ENCODE measurements at regions of chr5 and their contacts with region 1.

Region 1: GRCh38 chr5:140664359-140665119 is at the start of gene WDR55:
- DNase-seq: peak; percentile 94
- H3K4me3 Mint-ChIP-seq: peak within 1 kb of the TSS; percentile 100
- H3K27ac Mint-ChIP-seq: peak within 1 kb of the TSS; percentile 93
- H3K4me1 Mint-ChIP-seq: peaks cover 28% of the 10 kb centered on the region
- H3K27me3 Mint-ChIP-seq: no peaks in the 10 kb centered on the region
- total RNA-seq, gene WDR55: 42.7 and 43.2 TPM in 2 replicates

Region 2: DNA sequence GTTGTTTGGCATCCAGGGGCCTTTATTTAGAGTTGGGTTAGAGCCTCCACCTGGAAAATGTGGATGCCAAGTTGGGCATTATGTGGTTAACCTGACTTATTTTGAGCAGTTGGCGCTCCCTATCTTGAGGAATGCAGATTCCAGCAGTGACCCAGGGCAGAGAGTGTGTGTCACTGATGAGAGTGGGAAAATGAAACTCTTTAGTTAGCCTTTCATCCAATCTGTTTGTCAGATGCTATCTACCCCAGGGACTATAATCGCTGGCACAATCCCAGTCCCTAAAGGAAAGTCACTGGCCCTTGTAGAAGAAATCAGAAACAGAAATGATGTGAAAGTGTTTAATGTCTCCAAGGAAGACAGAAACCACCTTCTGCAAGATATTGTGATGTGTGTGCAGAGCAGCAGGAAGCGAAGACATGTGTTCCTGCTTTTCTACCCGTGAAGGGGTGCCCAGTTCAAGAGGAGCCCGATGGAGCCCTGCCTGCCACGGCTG is 1171.8 kb before region 1 on chr5:
- intact Hi-C with region 1: no loop called
- DNase-seq: no peak
- H3K4me3 Mint-ChIP-seq: no peak overlapping the region
- H3K27ac Mint-ChIP-seq: no peak overlapping the region
- H3K4me1 Mint-ChIP-seq: peaks cover 37% of the 10 kb centered on the region
- H3K27me3 Mint-ChIP-seq: no peaks in the 10 kb centered on the region

Region 3: DNA sequence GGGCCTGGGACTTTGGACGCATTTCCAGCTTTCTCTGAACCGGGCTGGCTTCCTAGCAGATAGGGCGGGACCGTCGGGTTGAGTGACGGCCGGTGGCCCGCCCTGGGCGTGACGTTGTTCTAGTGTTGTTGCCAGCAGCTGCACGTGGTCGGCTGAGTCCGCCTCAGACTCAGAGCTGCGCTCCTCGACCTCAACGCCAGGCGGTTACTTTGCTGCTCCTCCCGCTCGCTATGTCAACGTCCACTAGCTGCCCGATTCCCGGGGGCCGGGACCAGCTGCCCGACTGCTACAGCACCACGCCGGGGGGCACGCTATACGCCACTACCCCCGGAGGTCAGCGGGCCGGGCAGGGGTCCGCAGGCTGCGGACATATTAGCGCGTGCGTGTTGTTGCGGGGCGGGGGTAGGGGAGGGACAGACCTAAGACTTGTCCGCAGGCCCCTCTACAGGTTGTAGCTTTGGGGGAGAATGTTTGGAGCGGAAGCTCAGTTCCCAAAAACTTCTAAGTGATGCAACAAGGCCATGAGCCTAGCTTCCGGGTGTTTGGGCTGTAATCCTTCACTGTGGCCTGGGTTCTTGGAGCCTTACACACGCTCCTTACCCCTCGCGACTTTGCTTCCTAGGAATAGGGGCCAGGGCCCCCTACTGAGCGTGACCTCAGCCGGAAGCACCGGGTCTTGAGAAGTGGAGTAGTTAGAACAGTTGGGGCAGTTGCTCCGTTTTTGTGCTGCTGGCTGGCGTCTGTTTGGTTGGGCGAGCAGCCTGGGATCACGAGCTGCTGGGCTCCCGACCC is 116.8 kb before region 1 on chr5 and contains the start of gene EIF4EBP3:
- intact Hi-C with region 1: loop called (anchors 1 kb)
- DNase-seq: peak; percentile 81
- H3K4me3 Mint-ChIP-seq: peak within 1 kb of the TSS; percentile 80
- H3K27ac Mint-ChIP-seq: peak within 1 kb of the TSS; percentile 82
- H3K4me1 Mint-ChIP-seq: peaks cover 48% of the 10 kb centered on the region
- H3K27me3 Mint-ChIP-seq: no peaks in the 10 kb centered on the region
- total RNA-seq, gene EIF4EBP3: 12.7 and 16.1 TPM in 2 replicates

Region 4: DNA sequence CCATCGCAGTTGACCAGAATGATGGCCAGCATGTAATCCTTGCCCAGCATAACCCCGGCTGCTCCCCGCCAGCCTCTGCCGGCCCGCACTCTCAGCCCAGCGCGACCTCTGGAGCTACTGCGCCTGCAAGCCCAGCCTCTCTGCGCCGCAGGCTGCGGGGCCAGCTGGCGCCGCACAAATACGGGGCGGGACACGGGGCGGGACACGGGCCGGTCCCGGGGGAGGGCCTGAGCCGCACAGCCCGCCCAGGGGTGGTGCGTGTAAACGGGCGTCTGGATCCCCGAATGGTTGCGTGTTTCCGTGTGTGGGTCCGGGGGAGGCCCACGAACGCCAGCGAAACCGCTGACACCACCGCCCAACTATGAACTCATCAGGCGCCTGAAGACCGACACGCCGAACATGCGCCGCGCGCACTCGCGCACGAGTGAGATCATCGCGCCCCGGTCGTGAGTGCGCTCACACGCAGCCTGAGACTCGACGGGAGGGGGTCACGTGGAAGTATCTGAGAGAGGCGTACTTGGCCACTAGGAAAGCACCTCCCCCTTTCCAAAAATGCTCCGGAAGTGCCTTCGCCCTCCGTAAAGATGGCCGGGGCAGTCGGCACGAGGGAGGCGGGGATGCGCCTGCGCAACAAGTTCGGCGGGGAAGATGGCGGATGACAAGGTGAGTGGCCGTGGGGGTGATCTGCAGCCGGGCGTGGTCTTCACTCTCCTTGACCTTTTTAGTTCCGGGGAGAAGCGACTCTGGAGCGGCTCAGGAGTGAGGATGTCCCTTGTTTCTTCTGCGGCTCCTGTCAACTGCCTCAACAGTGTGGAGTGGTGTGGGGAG is 100.1 kb before region 1 on chr5 and contains the starts of genes APBB3 and SLC35A4:
- intact Hi-C with region 1: loop called (anchors 1 kb)
- DNase-seq: peak; percentile 98
- H3K4me3 Mint-ChIP-seq: peak within 1 kb of the TSS; percentile 95
- H3K27ac Mint-ChIP-seq: peak within 1 kb of the TSS; percentile 96
- H3K4me1 Mint-ChIP-seq: peaks cover 54% of the 10 kb centered on the region
- H3K27me3 Mint-ChIP-seq: no peaks in the 10 kb centered on the region
- total RNA-seq, gene APBB3: 17.2 and 21.2 TPM in 2 replicates
- total RNA-seq, gene SLC35A4: 94.3 and 107 TPM in 2 replicates

Region 5: DNA sequence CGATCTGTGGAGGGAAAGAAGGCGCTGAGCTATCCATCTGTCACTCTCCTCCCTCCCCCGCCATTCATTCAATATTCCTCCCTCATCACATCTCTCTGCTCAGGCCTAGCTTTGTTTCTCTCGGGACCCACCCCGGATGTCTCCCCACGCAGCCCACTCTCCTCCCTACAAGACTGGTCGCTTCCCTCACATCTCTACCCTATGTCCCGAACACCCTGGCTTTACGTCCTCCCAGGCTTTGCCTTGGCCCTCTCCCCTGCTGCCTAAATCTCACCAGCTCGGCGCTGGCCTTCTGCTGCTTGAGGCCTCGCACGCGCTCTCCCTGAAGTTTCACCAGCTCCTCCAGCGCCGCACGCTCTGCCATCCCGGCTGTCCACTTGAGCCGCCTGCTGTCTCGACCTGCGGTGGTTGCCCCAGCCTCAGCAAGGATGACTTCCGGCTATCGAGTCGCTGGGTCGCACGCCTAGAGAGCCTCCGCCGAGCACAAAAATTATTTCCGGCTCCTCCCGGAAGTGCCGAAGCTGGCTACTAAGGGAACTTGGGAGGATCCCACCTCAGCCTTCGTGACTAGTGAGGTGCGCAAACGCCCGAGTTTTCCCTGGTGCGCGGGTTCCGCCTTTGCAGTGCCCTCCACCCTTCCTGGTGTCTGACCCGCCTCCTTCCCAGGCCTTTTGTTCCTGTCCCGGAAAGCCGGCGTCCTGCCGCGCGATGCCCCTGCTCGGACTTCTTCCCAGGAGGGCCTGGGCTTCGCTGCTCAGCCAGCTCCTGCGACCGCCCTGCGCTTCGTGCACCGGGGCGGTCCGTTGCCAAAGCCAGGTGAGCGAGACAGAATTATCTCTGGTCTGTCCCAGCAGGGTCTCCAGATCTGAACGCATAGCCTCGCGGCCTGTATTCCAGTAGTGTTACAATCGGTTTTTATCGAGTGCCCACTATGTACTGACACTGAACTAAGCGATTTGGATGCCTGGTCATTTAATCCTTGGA is 26.7 kb after region 1 on chr5 and contains the starts of genes HARS1 and HARS2:
- intact Hi-C with region 1: loop called (anchors 1 kb)
- DNase-seq: peak; percentile 81
- H3K4me3 Mint-ChIP-seq: peak within 1 kb of the TSS; percentile 100
- H3K27ac Mint-ChIP-seq: peak within 1 kb of the TSS; percentile 95
- H3K4me1 Mint-ChIP-seq: peaks cover 50% of the 10 kb centered on the region
- H3K27me3 Mint-ChIP-seq: no peaks in the 10 kb centered on the region
- total RNA-seq, gene HARS1: 112 and 114 TPM in 2 replicates
- total RNA-seq, gene HARS2: 31.2 and 32.7 TPM in 2 replicates

Region 6: GRCh38 chr5:141618804-141619554 is 954.4 kb after region 1 on chr5 and contains the start of gene DIAPH1:
- intact Hi-C with region 1: loop called (anchors 1 kb)
- DNase-seq: peak; percentile 96
- H3K4me3 Mint-ChIP-seq: peak within 1 kb of the TSS; percentile 98
- H3K27ac Mint-ChIP-seq: peak within 1 kb of the TSS; percentile 96
- H3K4me1 Mint-ChIP-seq: peaks cover 59% of the 10 kb centered on the region
- H3K27me3 Mint-ChIP-seq: no peaks in the 10 kb centered on the region
- total RNA-seq, gene DIAPH1: 221 and 234 TPM in 2 replicates